Psoas muscle (tissue), 8 donors: ENCODE measurements at regions of chr6 and their contacts with region 1.

Region 1: DNA sequence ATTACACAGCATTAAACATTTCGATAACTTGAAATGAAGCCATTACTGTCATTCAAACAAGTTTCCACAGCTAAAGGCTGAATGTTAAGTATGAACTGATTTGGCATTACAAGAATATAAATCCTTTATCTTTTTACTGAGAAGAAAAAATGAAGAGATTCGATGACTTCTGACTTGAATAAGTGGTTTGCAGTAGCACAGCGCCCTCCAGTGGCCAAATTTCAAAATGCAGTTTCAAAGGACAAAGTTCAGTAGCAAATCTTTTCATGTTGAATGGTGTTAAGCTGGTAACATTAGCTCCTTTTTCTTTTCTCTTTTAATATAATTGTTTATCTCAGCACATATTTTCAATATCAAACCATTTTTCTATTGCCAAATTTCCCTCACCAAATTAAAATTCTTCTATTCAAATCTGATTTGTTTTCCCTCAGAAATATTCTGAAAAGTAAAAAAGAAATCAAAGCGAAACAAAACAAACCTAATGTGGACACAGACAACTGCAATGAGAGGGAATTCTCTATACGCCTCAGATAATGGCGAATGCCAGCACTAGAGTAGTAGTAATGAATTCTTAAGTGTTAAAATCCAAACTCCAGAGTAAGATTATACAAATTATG is 145.7 kb downstream of the BTBD9 start:
- DNase-seq: peak; percentile 57 to 64
- ATAC-seq: peak in 3 of 4 donors; percentile 49 to 73 (median 54)
- H3K4me3 ChIP-seq: no peak overlapping the region
- H3K27ac ChIP-seq: no peak overlapping the region
- H3K4me1 ChIP-seq: no peaks in the 10 kb centered on the region
- H3K27me3 ChIP-seq: no peaks in the 10 kb centered on the region
- CTCF ChIP-seq: peak; percentile 99

Region 2: DNA sequence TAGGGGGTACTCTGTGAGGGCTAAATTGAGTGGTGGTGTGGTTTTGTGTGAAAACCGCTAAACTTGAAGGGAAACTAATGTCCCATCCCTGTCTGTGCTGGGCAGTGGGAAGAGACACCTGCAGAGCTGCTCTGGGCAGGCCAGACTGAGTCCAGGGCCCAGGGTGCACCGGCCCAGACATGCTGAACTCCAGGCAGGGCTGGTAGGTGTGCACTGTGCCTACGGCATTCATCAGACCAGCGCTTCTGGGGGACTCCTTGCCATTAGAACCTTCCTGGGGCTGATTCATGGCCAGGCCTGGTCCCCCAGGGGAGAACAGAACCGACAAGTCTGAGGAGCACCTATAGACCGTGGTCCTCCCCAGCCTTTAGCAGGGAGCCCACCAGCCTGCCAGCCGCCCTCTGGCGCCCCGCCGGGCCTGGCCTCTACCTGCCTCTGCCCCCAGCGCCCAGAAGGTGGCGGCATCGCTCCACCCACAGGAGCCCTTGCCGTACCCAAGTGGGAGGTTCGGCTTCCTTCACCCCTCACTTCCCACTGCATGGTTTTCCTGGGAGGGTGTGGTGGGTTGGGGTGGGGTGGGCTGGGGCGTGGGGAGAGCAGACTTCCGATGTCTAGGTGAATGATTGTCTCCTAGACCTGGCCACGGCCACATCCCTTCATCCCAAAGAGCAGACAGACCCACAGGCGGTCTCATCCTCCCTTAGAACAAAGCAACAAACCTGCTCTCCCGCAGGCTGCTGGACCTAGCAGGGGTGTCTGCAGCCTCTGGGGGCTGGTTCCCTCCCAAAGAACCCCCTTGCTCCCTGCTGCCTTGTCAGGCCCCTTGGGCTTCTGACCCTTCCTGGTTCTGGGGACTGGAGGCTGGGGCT is 1009.9 kb before region 1 on chr6:
- intact Hi-C with region 1: loop called in 1 of 2 experiments (anchors 10 kb)
- DNase-seq: peak; percentile 46 to 81
- ATAC-seq: peak; percentile 76 to 88 (median 80)
- H3K4me3 ChIP-seq: no peak overlapping the region
- H3K27ac ChIP-seq: no peak overlapping the region
- H3K4me1 ChIP-seq: no peaks in the 10 kb centered on the region
- H3K27me3 ChIP-seq: no peaks in the 10 kb centered on the region
- CTCF ChIP-seq: peak; percentile 71

Region 3: GRCh38 chr6:37705239-37706051 is 788.6 kb before region 1 on chr6:
- intact Hi-C with region 1: loop called in 1 of 2 experiments (anchors 10 kb)
- DNase-seq: peak; percentile 83 to 88
- ATAC-seq: peak; percentile 80 to 93 (median 83)
- H3K4me3 ChIP-seq: peak overlapping the region; percentile 59
- H3K27ac ChIP-seq: peak overlapping the region; percentile 41
- H3K4me1 ChIP-seq: peaks cover 5% of the 10 kb centered on the region
- H3K27me3 ChIP-seq: no peaks in the 10 kb centered on the region
- CTCF ChIP-seq: peak; percentile 55

Region 4: GRCh38 chr6:38034274-38034914 is 459.6 kb before region 1 on chr6:
- intact Hi-C with region 1: loop called in 1 of 2 experiments (anchors 10 kb)
- DNase-seq: no peak
- ATAC-seq: peak in 1 of 4 donors; percentile 44
- H3K4me3 ChIP-seq: no peak overlapping the region
- H3K27ac ChIP-seq: no peak overlapping the region
- H3K4me1 ChIP-seq: peaks cover 48% of the 10 kb centered on the region
- H3K27me3 ChIP-seq: no peaks in the 10 kb centered on the region
- CTCF ChIP-seq: peak; percentile 37

Region 5: GRCh38 chr6:38184585-38185080 is 309.4 kb before region 1 on chr6:
- intact Hi-C with region 1: loop called in 1 of 2 experiments (anchors 5 kb)
- DNase-seq: no peak
- ATAC-seq: no peak
- H3K4me3 ChIP-seq: no peak overlapping the region
- H3K27ac ChIP-seq: no peak overlapping the region
- H3K4me1 ChIP-seq: peaks cover 1% of the 10 kb centered on the region
- H3K27me3 ChIP-seq: no peaks in the 10 kb centered on the region
- CTCF ChIP-seq: no peak